Esophagus muscularis mucosa (tissue), 4 donors: ENCODE measurements at regions of chrX and their contacts with region 1.

Region 1: GRCh38 chrX:136162831-136163570 is 15.7 kb downstream of the FHL1 start:
- DNase-seq: no peak
- H3K4me3 ChIP-seq: no peak overlapping the region
- H3K27ac ChIP-seq: peak overlapping the region; percentile 94 to 99 (median 98)
- H3K4me1 ChIP-seq: peaks cover 35 to 100% (median 67%) of the 10 kb centered on the region in 4 donors
- H3K27me3 ChIP-seq: no peaks in the 10 kb centered on the region
- CTCF ChIP-seq: peak; percentile 66 to 71 (median 67)
- EP300 ChIP-seq: no peak
- POLR2A ChIP-seq: no peak

Region 2: DNA sequence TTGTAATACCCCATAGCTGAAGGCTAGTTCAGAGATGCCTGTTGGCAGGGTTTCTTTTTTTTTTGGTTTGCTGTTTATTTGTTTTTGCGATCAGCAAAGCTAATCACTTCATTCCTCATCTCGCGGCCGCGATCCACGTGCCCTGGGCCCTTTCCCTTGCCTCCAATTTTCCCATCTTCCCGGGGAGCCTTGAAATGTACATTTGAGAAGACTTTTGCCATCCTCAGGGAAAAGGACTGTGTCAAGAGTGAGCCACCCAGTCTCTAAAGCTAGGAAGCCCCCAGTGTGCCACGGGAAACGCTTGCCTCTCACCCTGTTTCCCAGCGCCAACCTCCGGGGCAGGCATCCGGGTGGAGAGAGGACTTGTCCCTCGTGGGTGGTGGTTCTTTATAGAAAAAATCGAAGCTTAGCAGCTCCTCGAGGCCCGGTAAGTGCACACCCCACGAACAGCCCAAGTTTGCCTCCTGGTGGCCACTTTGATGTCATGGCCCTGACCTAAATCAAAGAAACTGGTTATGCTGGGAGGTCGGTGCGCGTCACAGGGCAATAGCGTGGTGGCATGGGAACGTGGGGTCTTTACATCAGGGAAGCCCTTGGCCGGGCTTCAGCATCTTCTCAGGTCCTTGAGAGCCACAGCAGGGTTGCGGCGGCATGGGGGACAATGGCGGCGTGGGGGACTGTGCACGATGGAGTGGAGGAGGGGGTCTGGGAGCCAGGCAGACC is 46.2 kb after region 1 on chrX:
- intact Hi-C with region 1: loop called (anchors 2 kb)
- DNase-seq: no peak
- H3K4me3 ChIP-seq: peak overlapping the region; percentile 5 to 55 (median 35)
- H3K27ac ChIP-seq: peak overlapping the region; percentile 86 to 99 (median 96)
- H3K4me1 ChIP-seq: peaks cover 35 to 64% (median 63%) of the 10 kb centered on the region in 4 donors
- H3K27me3 ChIP-seq: no peaks in the 10 kb centered on the region
- CTCF ChIP-seq: peak; percentile 57 to 61 (median 59)
- EP300 ChIP-seq: no peak
- POLR2A ChIP-seq: no peak